Dorsolateral prefrontal cortex (tissue), 120 donors: ENCODE measurements at regions of chr21 and their contacts with region 1.

Region 1: DNA sequence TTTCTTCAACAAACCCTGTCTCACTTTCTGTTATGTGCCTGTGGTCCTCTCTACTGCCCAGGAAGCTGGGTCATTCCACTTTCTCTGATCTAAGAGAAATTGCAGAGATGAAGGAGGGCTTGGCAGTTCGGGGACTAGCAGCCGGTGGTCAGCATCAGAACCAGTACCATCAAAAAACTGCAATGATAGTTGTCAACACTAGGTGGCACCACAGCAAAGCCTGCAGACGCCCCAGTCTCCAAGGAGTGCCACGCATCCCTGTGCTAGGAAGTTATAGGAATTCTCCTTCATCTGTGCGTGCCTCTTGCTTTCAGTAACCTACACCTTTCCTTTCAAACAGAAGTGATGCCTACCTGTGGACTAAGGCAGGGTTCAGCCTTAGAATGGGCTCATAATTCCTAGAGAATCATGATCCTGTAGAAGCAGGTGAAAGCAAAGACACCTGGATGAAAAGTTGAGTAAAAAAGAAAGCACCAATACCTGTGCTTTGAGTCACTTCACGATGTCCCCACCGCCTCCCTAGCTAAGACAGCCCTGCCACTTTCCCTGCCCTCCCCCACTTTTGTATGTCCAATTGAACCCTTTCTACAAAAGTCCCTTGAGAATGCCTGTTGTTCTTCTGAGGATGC is 129.2 kb downstream of the ADAMTS1 start:
- DNase-seq: peak in 8 of 10 donors; percentile 44 to 66 (median 52)
- H3K4me3 ChIP-seq: peak overlapping the region in 1 of 59 donors; percentile 8
- H3K27ac ChIP-seq: peak overlapping the region in 2 of 59 donors; percentile 9 to 21
- H3K27me3 ChIP-seq: no peaks in the 10 kb centered on the region
- CTCF ChIP-seq: peak; percentile 64 to 92 (median 84)

Region 2: DNA sequence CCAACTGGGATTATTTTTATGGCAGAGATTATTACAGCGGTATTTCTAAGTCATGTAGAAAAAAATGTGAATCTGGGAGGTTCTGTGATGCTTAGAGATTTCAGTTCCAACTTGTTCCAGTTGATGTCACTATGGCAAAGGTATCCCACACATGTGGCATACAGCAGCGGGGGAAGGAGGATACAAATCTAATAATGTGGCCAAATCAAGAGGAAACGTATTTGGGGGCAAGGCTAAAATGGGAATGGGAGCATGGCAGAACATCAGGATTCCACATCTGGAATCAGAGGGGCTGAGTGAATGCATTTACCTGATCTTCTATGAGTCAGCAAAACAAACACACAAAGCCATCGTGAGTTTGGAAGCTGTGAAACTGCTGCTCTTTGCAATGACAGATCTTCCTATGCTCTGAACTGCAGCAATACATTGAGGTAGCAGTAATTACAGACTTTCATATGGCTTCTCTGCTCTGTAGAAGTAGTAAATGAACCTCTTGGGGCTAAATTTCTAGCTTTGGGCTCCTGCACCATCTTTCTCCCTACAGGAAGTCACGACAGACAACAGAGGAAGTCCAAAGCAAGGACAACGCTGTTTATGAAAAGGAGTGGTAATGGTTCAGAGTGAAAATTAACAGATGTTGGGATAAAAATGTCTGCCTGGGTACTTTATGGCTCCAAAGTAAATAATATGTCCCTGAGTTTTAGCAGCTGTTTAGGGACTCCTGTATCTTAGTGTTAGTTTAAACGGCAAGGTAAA is 925.7 kb before region 1 on chr21:
- intact Hi-C with region 1: loop called (anchors 5 kb)
- DNase-seq: peak in 1 of 10 donors; percentile 34
- H3K4me3 ChIP-seq: peak overlapping the region; percentile 3 to 70 (median 51)
- H3K27ac ChIP-seq: peak overlapping the region in 50 of 59 donors; percentile 17 to 86 (median 66)
- H3K27me3 ChIP-seq: no peaks in the 10 kb centered on the region
- CTCF ChIP-seq: peak in 55 of 56 donors; percentile 29 to 78 (median 59)

Region 3: DNA sequence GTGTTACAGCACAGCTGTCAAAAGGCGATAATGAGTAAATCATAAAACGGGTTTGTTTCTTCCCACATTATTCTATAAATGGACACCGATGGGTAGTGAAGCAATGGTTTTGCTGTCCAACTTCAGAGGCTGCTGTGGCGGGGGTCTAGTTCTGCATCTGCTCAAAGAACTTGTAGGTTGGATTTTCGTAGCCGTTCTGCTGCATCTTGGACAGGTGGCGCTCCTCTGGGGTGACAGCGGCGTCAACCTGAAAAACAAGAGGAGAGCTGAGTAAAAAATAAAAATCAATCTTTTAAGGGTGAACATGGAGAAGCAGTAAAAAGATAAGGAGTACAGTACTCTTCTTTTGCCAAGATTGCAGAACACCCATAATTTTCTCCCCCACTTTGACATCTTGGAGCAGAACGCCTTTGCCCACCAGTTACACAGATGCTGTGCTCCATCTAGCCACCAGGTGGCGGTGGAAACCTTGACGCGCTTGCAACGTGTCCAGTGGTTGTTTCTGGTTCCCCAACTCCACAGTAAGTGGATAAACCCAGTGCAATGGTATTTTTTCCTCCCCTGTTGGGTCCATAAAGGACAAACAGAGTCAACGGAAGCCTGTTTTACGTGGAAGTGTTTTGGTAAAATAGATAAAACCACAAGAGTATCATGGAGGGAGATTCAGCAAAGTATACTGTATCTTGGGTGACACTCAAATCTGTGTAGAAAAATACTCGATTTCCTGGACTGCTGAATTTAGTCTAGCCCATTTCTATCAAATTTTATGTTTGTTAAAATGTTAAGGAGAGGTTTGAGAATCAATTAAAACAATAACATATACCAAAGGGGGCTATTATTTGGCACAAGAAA is 834.2 kb before region 1 on chr21:
- intact Hi-C with region 1: loop called in 1 of 2 experiments (anchors 5 kb)
- DNase-seq: peak; percentile 57 to 82 (median 74)
- H3K4me3 ChIP-seq: no peak overlapping the region
- H3K27ac ChIP-seq: peak overlapping the region in 52 of 59 donors; percentile 4 to 76 (median 44)
- H3K27me3 ChIP-seq: no peaks in the 10 kb centered on the region
- CTCF ChIP-seq: peak; percentile 77 to 99 (median 97)